Prostate gland (tissue), 2 donors: ENCODE measurements at regions of chrX and their contacts with region 1.

Region 1: DNA sequence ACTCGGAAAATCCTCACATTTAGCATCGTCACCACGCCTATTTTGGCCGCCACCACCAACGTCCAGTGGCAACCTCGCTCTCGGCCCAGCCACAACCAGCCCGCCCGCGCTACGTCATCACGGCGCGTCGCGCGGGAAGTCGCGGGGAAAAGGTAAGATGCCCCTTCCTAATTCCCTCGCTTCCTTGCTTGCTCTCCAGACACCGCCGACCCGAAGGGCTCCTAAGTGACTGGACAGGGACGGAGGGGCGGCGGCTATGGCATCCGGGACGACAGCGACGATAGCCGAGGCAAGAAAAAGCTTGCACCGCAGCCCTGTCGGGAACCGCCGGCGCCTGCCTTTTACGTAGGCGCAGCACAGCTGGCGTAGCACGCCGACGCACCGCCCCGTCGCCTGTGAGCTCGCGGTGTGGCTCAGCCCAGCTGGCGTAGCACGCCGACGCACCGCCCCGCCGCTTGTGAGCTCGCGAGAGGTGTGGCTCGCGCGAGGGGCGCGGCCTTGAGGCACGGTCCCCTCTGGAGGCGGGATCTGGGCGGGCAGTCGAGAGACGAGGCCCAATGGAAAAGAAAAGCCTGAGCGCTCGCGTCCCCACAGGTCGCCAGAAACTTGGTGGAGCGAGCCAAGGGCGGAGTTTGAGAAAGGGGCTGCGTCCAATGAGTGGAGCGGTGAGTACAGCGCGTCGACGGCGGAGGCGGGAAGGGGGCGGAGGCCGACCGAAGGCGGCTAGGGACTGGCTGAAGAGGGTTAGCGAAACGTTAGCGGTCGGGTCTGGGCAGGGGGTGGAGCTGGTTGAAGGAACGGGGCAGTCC is at the start of gene HDAC6:
- DNase-seq: peak; percentile 96
- H3K4me3 ChIP-seq: peak within 1 kb of the TSS; percentile 49 to 53
- H3K27ac ChIP-seq: peak within 1 kb of the TSS; percentile 93 to 97
- H3K4me1 ChIP-seq: no peaks in the 10 kb centered on the region
- H3K27me3 ChIP-seq: no peaks in the 10 kb centered on the region
- CTCF ChIP-seq: peak in 1 of 4 experiments; percentile 31
- POLR2A ChIP-seq: no peak
- total RNA-seq, gene HDAC6: 102 to 113 TPM

Region 2: DNA sequence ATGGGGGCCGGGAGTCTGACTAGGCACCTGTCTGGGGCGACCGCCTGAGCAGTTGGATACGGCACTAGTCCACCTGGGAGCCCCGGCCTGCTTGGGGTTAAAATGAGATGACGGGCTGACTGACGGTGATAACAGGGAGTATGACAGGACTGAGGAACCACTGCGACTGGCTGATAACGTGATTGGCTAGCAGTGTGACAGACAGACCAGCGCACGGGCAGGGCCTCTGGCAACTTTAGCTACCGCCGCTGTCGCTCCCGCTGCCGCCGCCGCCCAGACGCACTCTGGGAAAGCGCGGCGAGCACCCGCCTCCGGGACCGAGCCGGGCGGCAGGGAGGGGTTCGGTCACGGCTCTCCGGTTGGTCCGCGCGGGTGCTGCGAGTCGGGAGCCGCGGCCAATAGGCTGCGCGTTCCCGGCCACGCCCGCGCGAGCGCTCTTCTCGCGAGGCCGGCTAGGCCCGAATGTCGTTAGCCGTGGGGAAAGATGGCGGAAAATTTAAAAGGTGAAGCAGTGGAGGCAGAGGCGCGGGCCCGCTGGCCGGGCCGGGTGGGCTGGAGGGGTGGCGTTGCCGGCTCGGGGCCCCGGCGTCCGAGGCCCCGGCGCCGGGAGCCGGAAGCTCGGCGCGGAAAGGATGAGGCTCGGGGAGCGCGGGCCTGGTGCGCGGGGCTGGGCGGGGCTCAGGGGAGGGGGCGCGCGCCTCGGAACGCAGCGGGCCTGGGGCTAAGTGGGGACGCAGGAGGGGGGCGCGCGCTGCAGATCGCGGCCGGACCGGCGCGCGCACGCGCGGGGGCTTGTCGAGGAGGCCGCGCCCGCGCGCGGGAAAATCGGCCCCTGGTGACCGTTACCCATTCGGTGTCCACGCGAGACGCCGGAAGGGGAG is 104.9 kb before region 1 on chrX and contains the start of gene SUV39H1:
- intact Hi-C with region 1: loop called (anchors 10 kb)
- DNase-seq: peak; percentile 84
- H3K4me3 ChIP-seq: peak within 1 kb of the TSS; percentile 46 to 63
- H3K27ac ChIP-seq: peak within 1 kb of the TSS; percentile 83 to 86
- H3K4me1 ChIP-seq: no peaks in the 10 kb centered on the region
- H3K27me3 ChIP-seq: no peaks in the 10 kb centered on the region
- CTCF ChIP-seq: peak in 1 of 4 experiments; percentile 5
- POLR2A ChIP-seq: peak; percentile 63
- total RNA-seq, gene SUV39H1: 7.4 to 9.1 TPM

Region 3: GRCh38 chrX:48737213-48737938 is 64.1 kb before region 1 on chrX:
- intact Hi-C with region 1: loop called (anchors 2 kb)
- DNase-seq: peak; percentile 88
- H3K4me3 ChIP-seq: peak overlapping the region; percentile 41 to 47
- H3K27ac ChIP-seq: peak overlapping the region; percentile 84 to 86
- H3K4me1 ChIP-seq: no peaks in the 10 kb centered on the region
- H3K27me3 ChIP-seq: no peaks in the 10 kb centered on the region
- CTCF ChIP-seq: no peak
- POLR2A ChIP-seq: no peak

Region 4: DNA sequence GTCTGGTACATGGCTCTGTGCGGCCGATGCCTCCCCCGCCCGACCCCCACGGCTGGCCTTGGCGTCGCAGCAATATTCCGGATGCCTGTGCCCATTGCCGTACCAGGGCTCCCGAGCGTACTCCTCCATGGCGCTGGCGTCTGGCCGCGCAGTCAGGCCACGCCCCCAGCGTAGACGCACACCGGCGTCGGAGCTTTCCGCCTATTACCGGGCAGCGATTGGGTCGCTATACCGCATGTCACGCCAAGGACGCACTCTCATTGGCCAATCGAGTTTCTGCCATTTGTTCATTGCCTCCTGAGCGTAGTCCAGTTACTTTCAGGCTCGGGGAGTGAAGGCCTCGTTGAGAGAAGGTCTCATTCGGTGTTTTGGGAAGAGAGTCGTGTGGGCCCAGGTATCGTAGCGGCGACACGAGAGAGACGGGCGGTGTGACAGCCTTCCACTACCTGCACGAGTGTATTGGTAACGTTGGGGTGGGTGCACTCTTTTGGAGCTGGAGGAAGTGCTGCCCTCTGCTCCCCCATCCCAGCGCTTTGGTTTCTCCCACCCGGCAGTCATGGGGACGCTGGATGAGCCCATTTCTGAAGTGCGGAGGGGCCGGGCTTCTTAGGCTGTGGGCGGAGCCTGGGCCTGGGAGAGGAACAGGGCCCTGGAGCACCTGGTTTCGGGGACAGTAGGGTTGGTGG is 96.3 kb after region 1 on chrX and contains the starts of genes PQBP1 and TIMM17B:
- intact Hi-C with region 1: loop called (anchors 5 kb)
- DNase-seq: peak; percentile 89
- H3K4me3 ChIP-seq: peak within 1 kb of the TSS; percentile 54 to 57
- H3K27ac ChIP-seq: peak within 1 kb of the TSS; percentile 95
- H3K4me1 ChIP-seq: no peaks in the 10 kb centered on the region
- H3K27me3 ChIP-seq: no peaks in the 10 kb centered on the region
- CTCF ChIP-seq: no peak
- POLR2A ChIP-seq: peak; percentile 72
- total RNA-seq, gene PQBP1: 37.1 to 76.6 TPM
- total RNA-seq, gene TIMM17B: 58.2 to 85.8 TPM

Region 5: GRCh38 chrX:49043220-49043986 is 241.9 kb after region 1 on chrX and contains the start of gene TFE3:
- intact Hi-C with region 1: loop called (anchors 10 kb)
- DNase-seq: peak; percentile 97
- H3K4me3 ChIP-seq: peak within 1 kb of the TSS; percentile 63 to 73
- H3K27ac ChIP-seq: peak within 1 kb of the TSS; percentile 95 to 97
- H3K4me1 ChIP-seq: no peaks in the 10 kb centered on the region
- H3K27me3 ChIP-seq: no peaks in the 10 kb centered on the region
- CTCF ChIP-seq: peak in 3 of 4 experiments; percentile 60 to 89 (median 82)
- POLR2A ChIP-seq: peak; percentile 77
- total RNA-seq, gene TFE3: 44.6 to 88.4 TPM